ENCODE measurements at regions of chr5 and their contacts with region 1.

Region 1: DNA sequence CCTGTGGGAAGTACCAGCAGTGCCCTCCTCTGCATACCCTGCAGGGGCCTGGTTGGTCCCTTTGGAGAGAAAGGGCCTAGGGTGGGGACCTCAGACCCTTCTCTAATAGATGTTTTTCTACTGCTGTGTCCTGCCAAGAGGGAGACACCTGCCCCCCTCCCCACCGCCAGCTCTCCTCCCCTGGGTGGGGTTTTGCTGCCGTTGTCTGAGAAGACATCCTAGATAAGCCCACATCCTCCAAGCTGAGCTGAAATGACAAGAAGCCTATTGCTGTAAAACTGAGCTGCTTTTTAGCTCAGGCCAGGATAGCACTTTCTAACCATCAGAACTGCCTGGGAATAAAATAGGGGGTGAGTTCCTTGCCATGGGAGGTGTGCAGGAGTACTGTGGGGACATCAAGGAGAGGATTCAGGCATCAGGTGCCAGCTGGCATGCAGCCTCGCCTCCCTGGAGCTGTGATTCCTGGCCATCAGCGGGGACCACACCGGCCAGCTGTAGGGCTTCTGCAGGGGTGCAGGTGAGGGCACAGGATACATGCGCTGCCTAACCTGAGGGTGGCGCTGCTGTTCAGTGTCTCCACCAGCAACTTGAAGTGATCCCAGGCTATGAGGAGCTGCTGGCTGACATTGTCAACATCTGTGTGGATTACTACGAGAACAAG is 37.9 kb downstream of the CYFIP2 start:
- DNase-seq: peak; percentile 57
- ATAC-seq: peak; percentile 66 to 87

Region 2: GRCh38 chr5:157265714-157266285 is 38.0 kb before region 1 on chr5 and contains the start of gene CYFIP2:
- intact Hi-C with region 1: loop called in 1 of 2 experiments (anchors 5 kb)
- DNase-seq: peak; percentile 60
- ATAC-seq: peak; percentile 93 to 94
- total RNA-seq, gene CYFIP2: 18.1 to 27.6 TPM

Measured in left cardiac atrium (tissue), 4 donors.